ENCODE measurements at regions of chr11 and their contacts with region 1.

Region 1: GRCh38 chr11:9460322-9461067 is at the start of gene ZNF143:
- DNase-seq: peak; percentile 100
- H3K4me3 Mint-ChIP-seq: peak within 1 kb of the TSS; percentile 95
- H3K27ac Mint-ChIP-seq: peak within 1 kb of the TSS; percentile 95
- H3K4me1 Mint-ChIP-seq: peaks cover 28% of the 10 kb centered on the region
- H3K27me3 Mint-ChIP-seq: no peaks in the 10 kb centered on the region
- total RNA-seq, gene ZNF143: 43.5 to 45.5 TPM

Region 2: GRCh38 chr11:8566613-8567210 is 893.8 kb before region 1 on chr11:
- CTCF ChIA-PET with region 1: no interaction called
- POLR2A ChIA-PET with region 1: no interaction called
- DNase-seq: no peak
- H3K4me3 Mint-ChIP-seq: no peak overlapping the region
- H3K27ac Mint-ChIP-seq: no peak overlapping the region
- H3K4me1 Mint-ChIP-seq: no peaks in the 10 kb centered on the region
- H3K27me3 Mint-ChIP-seq: peaks cover 35% of the 10 kb centered on the region

Region 3: DNA sequence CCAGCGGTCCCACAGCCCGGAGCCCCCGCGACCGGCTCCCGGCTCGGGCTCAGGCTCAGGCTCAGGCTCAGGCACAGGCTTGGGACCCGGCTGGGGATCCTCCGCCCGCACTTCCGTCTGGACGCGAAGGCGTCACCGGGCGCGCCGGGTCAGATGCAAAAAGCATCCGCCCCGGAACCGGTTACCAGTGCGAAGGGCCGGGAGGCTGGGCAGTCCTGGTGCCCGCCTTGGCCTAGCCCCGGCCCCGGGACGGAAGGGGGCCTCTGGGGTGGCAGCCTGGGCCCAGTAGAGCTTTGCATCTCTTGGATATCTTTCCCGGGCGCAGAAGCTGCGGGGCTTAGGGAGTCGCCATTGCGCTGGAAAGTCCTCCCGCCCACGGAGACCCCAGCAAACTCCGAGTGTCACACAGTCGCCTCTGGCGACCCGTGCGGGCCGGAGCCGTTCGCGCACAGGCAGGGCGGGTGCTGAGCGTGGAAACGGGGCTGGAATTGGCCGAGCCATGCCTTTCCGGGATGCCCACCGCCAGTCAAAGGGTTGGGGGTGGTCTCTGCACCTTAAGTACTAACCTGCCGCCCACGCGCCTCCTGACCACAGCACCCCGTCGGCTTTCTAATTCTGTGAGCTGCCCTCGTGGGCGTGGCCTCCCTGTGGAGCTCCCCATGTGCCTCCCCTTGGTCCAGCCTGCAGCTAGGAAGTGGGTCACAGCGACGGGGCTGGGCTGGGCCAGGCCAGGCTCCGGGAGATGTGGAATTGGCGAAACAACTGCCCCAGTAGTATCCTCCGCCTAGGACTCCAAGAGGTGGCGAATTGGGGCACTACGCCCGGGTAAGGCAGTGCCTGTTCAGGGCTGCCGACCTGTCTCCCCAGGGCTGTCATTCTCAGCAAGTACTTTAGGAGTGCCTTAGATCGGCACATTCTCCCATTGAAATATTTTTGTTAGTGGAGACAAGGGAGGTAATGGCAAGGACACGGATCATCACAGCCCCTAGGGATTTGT is 495.9 kb before region 1 on chr11 and contains the start of gene TMEM9B:
- CTCF ChIA-PET with region 1: no interaction called
- POLR2A ChIA-PET with region 1: interaction called, 17 read pairs
- DNase-seq: peak; percentile 88
- H3K4me3 Mint-ChIP-seq: peak within 1 kb of the TSS; percentile 88
- H3K27ac Mint-ChIP-seq: peak within 1 kb of the TSS; percentile 91
- H3K4me1 Mint-ChIP-seq: peaks cover 32% of the 10 kb centered on the region
- H3K27me3 Mint-ChIP-seq: no peaks in the 10 kb centered on the region
- total RNA-seq, gene TMEM9B: 34.2 to 34.8 TPM

Region 4: DNA sequence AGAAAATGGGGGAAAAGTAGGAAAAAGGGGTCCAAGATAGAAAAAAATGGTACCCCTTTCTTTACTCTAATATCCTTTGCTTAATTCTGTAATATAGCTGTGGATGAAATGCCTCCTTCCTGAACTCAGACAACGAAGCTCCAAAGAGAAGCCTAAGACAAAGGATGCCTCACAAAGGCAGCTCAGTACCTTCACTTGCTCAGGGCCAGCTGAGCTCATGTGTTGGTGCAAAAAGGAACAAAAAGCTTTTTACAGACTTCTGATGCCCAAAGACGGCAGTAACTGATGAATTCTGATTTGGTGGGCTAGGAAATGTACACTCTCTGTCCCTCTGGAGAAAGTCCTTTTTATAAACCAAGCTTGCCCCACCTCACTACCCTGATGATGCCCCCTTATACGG is 272.9 kb before region 1 on chr11:
- CTCF ChIA-PET with region 1: no interaction called
- POLR2A ChIA-PET with region 1: no interaction called
- DNase-seq: no peak
- H3K4me3 Mint-ChIP-seq: no peak overlapping the region
- H3K27ac Mint-ChIP-seq: no peak overlapping the region
- H3K4me1 Mint-ChIP-seq: no peaks in the 10 kb centered on the region
- H3K27me3 Mint-ChIP-seq: no peaks in the 10 kb centered on the region

Region 5: DNA sequence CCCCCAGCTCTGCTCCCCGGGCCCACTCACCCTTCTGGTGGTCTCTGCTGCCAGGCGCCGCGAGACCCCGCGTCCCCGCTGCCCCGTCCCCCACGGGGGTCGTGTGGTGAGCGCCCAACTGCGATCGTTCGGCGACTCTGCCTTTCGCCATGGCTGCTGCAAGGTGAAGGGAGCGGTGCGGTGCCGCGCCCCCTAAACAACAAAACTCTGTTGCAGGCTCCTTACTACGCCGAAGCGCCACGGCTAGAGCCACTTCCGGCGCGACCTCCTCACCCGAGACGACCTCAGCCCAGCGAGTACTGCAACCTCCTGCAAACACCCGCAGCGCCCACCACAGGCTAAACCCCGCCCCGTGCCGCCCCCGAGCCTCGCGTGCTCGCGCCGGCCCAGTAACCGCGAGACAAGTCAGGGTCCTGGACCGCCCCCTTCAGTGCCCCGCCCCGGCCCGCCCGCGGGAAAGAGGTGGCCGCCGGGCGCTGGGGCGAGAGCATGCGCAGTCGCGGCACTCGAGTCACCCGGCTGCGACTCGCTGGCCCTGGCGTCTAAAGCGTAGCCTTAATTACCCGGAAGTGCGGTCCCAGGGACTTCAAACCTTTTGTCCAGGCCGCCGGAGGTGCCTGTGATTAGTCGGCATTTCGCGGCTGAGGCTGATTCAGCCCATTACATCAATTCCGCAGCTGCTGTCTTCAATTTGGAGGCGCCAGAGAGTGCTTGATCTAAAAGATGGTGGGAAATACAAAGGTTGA is 146.0 kb before region 1 on chr11 and contains the start of gene TMEM41B:
- CTCF ChIA-PET with region 1: no interaction called
- POLR2A ChIA-PET with region 1: interaction called, 15 read pairs
- DNase-seq: peak; percentile 99
- H3K4me3 Mint-ChIP-seq: peak within 1 kb of the TSS; percentile 92
- H3K27ac Mint-ChIP-seq: peak within 1 kb of the TSS; percentile 91
- H3K4me1 Mint-ChIP-seq: peaks cover 36% of the 10 kb centered on the region
- H3K27me3 Mint-ChIP-seq: peaks cover 21% of the 10 kb centered on the region
- total RNA-seq, gene TMEM41B: 43.3 to 49.0 TPM

Region 6: DNA sequence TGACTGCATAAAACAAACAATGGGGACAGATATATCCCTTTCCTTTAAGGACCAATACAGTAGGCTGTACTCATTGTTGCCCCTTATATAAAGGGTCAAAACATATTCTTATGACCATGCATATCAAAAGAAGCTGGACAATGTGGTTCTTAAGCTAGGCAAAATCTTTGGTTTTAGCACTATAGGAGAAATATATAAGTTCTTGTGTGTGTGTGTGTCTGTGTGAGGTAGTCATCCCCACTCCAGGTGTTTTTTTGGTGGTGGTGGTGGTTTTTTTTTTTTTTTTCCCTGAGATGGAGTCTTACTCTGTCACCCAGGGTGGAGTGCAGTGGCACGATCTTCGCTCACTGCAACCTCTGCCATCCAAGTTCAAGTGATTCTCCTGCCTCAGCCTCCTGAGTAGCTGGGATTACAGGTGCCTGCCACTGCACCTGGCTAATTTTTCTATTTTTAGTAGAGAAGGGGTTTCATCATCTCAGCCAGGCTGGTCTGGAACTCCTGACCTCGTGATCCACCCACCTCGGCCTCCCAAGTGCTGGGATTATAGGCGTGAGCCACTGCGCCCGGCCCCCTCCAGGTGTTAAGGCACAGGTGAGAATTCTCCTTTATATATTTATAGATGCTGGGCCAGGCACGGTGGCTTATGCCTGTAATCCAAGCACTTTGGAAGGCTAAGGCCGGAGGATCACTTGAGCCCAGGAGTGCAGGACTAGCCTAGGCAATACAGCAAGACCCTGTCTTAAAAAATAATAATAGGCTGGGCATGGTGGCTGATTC is 11.7 kb before region 1 on chr11:
- CTCF ChIA-PET with region 1: interaction called, 4 read pairs
- POLR2A ChIA-PET with region 1: interaction called, 43 read pairs
- DNase-seq: no peak
- H3K4me3 Mint-ChIP-seq: no peak overlapping the region
- H3K27ac Mint-ChIP-seq: no peak overlapping the region
- H3K4me1 Mint-ChIP-seq: peaks cover 10% of the 10 kb centered on the region
- H3K27me3 Mint-ChIP-seq: no peaks in the 10 kb centered on the region

Region 7: DNA sequence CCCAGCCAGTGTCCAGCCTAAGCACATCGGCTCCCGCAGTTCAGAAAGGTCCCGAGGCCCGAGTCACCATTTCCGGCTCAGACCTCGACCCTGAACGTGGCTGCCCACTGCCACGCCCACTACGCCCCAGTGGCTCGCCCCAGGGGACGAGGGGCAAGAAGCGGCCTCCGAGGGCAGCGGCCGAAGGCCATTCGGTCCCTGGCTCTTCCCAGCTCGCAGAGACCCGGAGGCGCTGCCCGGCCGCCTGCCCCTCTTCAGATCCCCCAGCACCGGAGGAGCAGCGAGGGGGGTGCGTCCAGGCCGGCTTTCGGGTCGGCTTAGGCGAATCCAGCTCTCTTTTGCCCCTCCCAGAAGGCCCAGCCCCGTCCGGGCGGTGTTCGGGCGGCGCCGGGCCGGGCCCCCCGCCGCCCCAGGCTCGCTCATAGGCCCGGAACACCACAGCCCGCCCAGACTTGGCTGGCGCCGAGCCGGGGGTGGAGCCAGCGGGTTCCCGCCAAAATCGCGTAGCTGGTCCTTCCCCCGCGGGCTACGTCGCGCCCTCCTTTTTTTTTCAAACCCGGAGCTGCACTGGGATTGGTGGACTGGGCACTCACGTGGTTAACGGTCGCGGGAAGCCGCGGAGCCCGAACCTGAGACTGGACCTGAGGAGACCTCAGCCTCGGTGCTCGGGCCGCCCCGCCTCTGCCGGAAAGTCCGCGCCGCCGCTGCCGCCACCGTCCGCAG is 112.7 kb after region 1 on chr11 and contains the start of gene WEE1:
- CTCF ChIA-PET with region 1: no interaction called
- POLR2A ChIA-PET with region 1: interaction called, 85 read pairs
- DNase-seq: peak; percentile 98
- H3K4me3 Mint-ChIP-seq: peak within 1 kb of the TSS; percentile 98
- H3K27ac Mint-ChIP-seq: peak within 1 kb of the TSS; percentile 83
- H3K4me1 Mint-ChIP-seq: peaks cover 37% of the 10 kb centered on the region
- H3K27me3 Mint-ChIP-seq: peaks cover 2% of the 10 kb centered on the region
- total RNA-seq, gene WEE1: 62.8 to 64.1 TPM